ENCODE measurements at regions of chr11 and their contacts with region 1.

Region 1: DNA sequence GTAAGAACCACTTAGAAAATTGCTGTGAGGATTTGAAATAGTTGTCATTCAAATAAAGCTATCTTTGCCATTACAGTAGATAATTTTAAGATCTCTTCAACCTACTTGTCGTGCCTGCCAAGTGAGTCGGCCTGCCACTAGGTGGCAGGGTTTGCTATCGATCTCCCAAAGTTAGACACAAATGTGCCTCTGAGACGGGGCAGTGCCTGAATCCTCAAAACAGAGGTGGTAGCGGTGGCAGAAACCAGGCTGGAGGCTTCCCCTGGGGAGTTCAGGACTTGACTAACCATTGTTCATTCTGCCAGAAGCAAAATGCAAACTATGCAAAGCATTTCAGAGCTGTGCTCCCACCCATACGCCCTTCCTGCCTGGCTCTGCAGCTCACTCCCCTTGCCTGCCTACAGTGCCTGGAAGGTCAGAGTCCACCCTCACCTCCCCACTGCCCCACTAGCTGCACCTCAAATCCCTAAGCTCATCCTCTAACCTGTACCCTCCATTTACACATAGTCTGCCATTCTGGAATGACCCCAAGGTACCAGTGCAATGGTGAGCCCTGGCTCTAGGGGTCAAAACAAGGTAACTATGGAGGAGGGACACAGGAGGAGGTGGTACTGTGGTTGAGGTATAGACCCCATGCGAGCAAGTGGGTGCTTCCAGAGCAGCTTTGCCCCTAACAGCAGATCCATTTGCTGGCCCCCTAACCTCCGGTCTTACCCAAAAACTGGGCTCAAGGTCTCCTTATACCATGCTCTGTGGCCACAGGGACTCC is 82.1 kb downstream of the C11orf58 start:
- DNase-seq: peak; percentile 96
- H3K4me3 ChIP-seq: no peak overlapping the region
- H3K27ac ChIP-seq: peak overlapping the region; percentile 12
- H3K4me1 ChIP-seq: peaks cover 27% of the 10 kb centered on the region
- H3K27me3 ChIP-seq: no peaks in the 10 kb centered on the region
- CTCF ChIP-seq: peak; percentile 85

Region 2: GRCh38 chr11:16749666-16750065 is 70.8 kb before region 1 on chr11:
- CTCF ChIA-PET with region 1: no interaction called
- POLR2A ChIA-PET with region 1: no interaction called
- intact Hi-C with region 1: no loop called
- DNase-seq: no peak
- H3K4me3 ChIP-seq: no peak overlapping the region
- H3K27ac ChIP-seq: no peak overlapping the region
- H3K4me1 ChIP-seq: no peaks in the 10 kb centered on the region
- H3K27me3 ChIP-seq: no peaks in the 10 kb centered on the region
- CTCF ChIP-seq: no peak

Region 3: DNA sequence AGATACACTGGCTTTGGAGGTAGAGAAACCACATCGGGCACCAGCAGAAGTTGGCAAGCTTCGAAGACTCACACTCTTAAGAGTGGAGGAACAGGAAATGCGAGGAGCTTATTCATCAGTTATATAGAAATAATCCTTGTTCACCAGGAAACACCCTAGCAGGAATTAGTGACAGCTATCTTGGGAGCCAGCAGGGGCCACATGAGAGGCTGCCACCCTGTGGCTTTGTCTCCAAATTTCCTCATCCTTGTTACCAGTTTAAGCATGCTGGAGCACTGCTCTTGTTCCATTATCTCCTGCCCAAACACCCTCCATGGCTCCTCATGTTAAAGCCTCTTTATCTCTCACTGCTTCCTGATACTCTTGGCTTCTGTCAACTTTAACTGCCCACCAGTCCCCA is 62.7 kb after region 1 on chr11:
- CTCF ChIA-PET with region 1: interaction called, 18 read pairs
- POLR2A ChIA-PET with region 1: no interaction called
- intact Hi-C with region 1: loop called (anchors 1 kb)
- DNase-seq: peak; percentile 95
- H3K4me3 ChIP-seq: no peak overlapping the region
- H3K27ac ChIP-seq: peak overlapping the region; percentile 69
- H3K4me1 ChIP-seq: peaks cover 32% of the 10 kb centered on the region
- H3K27me3 ChIP-seq: no peaks in the 10 kb centered on the region
- CTCF ChIP-seq: peak; percentile 56

Region 4: GRCh38 chr11:16897470-16898061 is 77.1 kb after region 1 on chr11:
- CTCF ChIA-PET with region 1: no interaction called
- POLR2A ChIA-PET with region 1: no interaction called
- intact Hi-C with region 1: loop called (anchors 5 kb)
- DNase-seq: peak; percentile 87
- H3K4me3 ChIP-seq: no peak overlapping the region
- H3K27ac ChIP-seq: peak overlapping the region; percentile 10
- H3K4me1 ChIP-seq: peaks cover 30% of the 10 kb centered on the region
- H3K27me3 ChIP-seq: no peaks in the 10 kb centered on the region
- CTCF ChIP-seq: no peak

Region 5: GRCh38 chr11:16935518-16936302 is 115.2 kb after region 1 on chr11:
- CTCF ChIA-PET with region 1: no interaction called
- POLR2A ChIA-PET with region 1: no interaction called
- intact Hi-C with region 1: loop called (anchors 2 kb)
- DNase-seq: peak; percentile 68
- H3K4me3 ChIP-seq: no peak overlapping the region
- H3K27ac ChIP-seq: no peak overlapping the region
- H3K4me1 ChIP-seq: peaks cover 16% of the 10 kb centered on the region
- H3K27me3 ChIP-seq: no peaks in the 10 kb centered on the region
- CTCF ChIP-seq: peak; percentile 66

Region 6: GRCh38 chr11:17063171-17064002 is 242.9 kb after region 1 on chr11:
- CTCF ChIA-PET with region 1: interaction called, 11 read pairs
- POLR2A ChIA-PET with region 1: no interaction called
- intact Hi-C with region 1: loop called (anchors 1 kb)
- DNase-seq: peak; percentile 54
- H3K4me3 ChIP-seq: no peak overlapping the region
- H3K27ac ChIP-seq: no peak overlapping the region
- H3K4me1 ChIP-seq: no peaks in the 10 kb centered on the region
- H3K27me3 ChIP-seq: no peaks in the 10 kb centered on the region
- CTCF ChIP-seq: peak; percentile 73

Measured in A673 (cell line).